CD14-positive monocyte (primary cell): ENCODE measurements at regions of chr10 and their contacts with region 1.

Region 1: DNA sequence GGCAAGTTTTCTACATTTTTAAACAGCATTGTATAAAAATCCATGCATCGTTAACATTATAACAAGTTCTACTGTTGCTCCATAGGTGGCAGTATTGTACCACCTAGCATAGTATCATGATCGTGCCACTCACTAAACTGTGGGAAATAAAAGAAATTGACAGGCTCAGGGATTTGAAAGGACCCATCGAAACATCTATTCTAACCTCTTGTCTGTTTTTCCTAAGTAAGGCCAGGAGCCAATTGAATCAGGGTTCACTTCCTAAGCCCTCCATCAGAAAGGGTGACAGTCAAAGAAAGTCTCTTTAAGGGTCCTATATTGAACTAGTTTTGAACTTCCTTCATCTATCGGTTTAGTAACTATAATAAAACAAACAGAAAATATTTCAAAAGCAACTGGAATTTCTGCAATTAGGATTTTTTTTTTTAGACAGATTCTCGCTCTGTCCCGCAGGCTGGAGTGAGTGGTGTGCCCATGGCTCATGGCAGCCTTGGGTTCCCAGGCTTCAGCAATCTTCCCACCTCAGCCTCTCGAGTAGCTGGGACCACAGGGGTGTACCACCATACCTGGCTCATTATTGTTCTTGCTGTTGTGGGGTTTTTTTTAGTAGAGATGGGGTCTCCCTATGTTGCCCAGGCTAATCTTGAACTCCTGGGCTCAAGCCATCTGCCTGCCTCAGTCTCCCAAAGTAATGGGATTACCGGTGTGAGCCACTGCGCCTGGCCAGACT is 9.4 kb downstream of the HACD1 start:
- DNase-seq: peak; percentile 30 to 73 (median 52)
- H3K4me3 ChIP-seq: no peak overlapping the region
- H3K4me3 Mint-ChIP-seq: no peak overlapping the region
- H3K27ac ChIP-seq: no peak overlapping the region
- H3K27ac Mint-ChIP-seq: no peak overlapping the region
- H3K4me1 ChIP-seq: no peaks in the 10 kb centered on the region
- H3K4me1 Mint-ChIP-seq: peaks cover 5% of the 10 kb centered on the region
- H3K27me3 ChIP-seq: no peaks in the 10 kb centered on the region
- H3K27me3 Mint-ChIP-seq: peaks cover 0 to 2% (median 0%) of the 10 kb centered on the region in 3 donors
- CTCF ChIP-seq: peak; percentile 89

Region 2: GRCh38 chr10:17742918-17743317 is 135.2 kb after region 1 on chr10:
- intact Hi-C with region 1: loop called (anchors 2 to 5 kb)
- DNase-seq: peak; percentile 29 to 46 (median 40)
- H3K4me3 ChIP-seq: no peak overlapping the region
- H3K4me3 Mint-ChIP-seq: no peak overlapping the region
- H3K27ac ChIP-seq: no peak overlapping the region
- H3K27ac Mint-ChIP-seq: peak overlapping the region in 2 of 7 donors; percentile 28 to 63
- H3K4me1 ChIP-seq: peaks cover 23% of the 10 kb centered on the region in 2 donors
- H3K4me1 Mint-ChIP-seq: peaks cover 31% of the 10 kb centered on the region
- H3K27me3 ChIP-seq: no peaks in the 10 kb centered on the region
- H3K27me3 Mint-ChIP-seq: peaks cover 0 to 3% (median 0%) of the 10 kb centered on the region in 3 donors
- CTCF ChIP-seq: peak; percentile 95

Region 3: DNA sequence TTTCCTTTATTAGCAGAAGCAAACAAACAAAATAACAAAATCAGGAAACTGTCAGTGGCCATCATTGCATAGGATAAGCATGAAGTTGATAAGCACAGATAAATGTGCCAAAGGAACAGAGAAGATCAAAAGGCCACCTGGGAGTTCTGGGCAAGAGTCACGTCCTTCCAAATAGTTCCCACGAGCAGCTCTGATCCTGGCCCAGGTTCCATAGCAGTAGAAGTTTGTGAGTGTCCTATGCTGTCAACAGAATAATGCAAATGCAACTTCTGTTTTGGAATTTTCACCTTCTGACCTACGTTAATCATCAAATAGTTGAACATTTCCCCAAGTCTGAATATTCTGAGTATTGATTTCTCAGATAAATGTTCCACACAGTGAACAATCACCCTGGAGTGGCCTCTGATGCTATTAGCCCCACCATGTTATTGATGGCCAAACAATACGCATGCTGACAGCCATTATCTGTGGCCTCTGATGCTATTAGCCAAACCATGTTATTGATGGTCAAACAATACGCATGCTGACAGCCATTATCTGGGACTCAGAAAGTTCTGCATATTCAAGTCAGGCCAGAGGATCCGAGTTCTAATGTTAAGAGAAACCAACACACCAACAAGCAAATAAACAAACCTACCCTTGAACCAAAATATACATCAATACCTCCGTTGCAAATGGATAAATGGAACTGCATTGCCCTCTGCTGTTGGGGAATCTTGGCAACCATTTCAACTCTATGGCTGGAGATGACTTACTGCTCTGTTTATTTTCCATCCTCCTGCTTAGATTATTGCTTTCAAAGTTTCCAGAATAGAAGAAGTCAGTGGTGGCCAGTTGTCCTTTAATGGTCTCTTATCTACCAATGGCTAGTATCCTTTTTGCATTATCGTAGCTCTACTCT is 264.7 kb after region 1 on chr10:
- intact Hi-C with region 1: loop called in 1 of 2 experiments (anchors 2 kb)
- DNase-seq: peak; percentile 3 to 37 (median 24)
- H3K4me3 ChIP-seq: no peak overlapping the region
- H3K4me3 Mint-ChIP-seq: no peak overlapping the region
- H3K27ac ChIP-seq: no peak overlapping the region
- H3K27ac Mint-ChIP-seq: no peak overlapping the region
- H3K4me1 ChIP-seq: peaks cover 9 to 10% of the 10 kb centered on the region in 2 donors
- H3K4me1 Mint-ChIP-seq: peaks cover 18% of the 10 kb centered on the region
- H3K27me3 ChIP-seq: no peaks in the 10 kb centered on the region
- H3K27me3 Mint-ChIP-seq: no peaks in the 10 kb centered on the region
- CTCF ChIP-seq: peak; percentile 68

Region 4: DNA sequence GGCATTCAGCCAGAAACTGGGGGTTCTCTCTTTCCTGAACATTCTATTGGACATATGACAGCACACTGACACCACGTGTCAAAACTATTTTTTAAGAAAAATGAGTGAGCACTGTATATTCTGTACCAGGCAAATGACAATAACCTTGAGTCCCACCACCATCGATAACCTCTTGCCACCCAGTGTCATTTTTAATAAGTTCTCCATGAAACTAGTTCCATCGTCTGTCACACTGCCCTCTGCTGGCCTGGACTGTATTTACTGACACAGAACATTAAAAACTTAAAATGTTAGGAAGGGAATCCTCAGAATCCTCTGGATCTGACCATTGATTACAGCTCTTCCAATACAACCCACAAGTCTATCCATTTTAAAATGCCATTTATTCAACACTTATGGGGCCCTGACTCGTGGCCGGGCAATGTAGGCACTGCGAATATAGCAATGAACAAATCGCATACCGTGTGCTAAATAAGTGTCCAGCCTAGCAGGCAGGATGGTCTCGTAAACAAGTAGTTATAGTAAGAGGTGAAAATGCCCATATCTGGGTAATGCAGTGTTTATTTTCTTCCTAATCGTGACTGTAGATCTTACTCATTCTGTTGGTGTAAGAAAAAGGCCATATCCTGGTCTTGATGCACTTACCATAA is 496.6 kb after region 1 on chr10:
- intact Hi-C with region 1: loop called (anchors 5 kb)
- DNase-seq: peak; percentile 23 to 42 (median 33)
- H3K4me3 ChIP-seq: no peak overlapping the region
- H3K4me3 Mint-ChIP-seq: no peak overlapping the region
- H3K27ac ChIP-seq: no peak overlapping the region
- H3K27ac Mint-ChIP-seq: no peak overlapping the region
- H3K4me1 ChIP-seq: peaks cover 10 to 24% of the 10 kb centered on the region in 2 donors
- H3K4me1 Mint-ChIP-seq: peaks cover 22% of the 10 kb centered on the region
- H3K27me3 ChIP-seq: no peaks in the 10 kb centered on the region
- H3K27me3 Mint-ChIP-seq: no peaks in the 10 kb centered on the region
- CTCF ChIP-seq: peak; percentile 86

Region 5: GRCh38 chr10:18109341-18109870 is 501.6 kb after region 1 on chr10:
- intact Hi-C with region 1: loop called (anchors 5 kb)
- DNase-seq: no peak
- H3K4me3 ChIP-seq: no peak overlapping the region
- H3K4me3 Mint-ChIP-seq: no peak overlapping the region
- H3K27ac ChIP-seq: no peak overlapping the region
- H3K27ac Mint-ChIP-seq: no peak overlapping the region
- H3K4me1 ChIP-seq: no peaks in the 10 kb centered on the region
- H3K4me1 Mint-ChIP-seq: no peaks in the 10 kb centered on the region
- H3K27me3 ChIP-seq: no peaks in the 10 kb centered on the region
- H3K27me3 Mint-ChIP-seq: no peaks in the 10 kb centered on the region
- CTCF ChIP-seq: no peak